CD4-positive, alpha-beta T cell (primary cell): ENCODE measurements at regions of chr11 and their contacts with region 1.

Region 1: DNA sequence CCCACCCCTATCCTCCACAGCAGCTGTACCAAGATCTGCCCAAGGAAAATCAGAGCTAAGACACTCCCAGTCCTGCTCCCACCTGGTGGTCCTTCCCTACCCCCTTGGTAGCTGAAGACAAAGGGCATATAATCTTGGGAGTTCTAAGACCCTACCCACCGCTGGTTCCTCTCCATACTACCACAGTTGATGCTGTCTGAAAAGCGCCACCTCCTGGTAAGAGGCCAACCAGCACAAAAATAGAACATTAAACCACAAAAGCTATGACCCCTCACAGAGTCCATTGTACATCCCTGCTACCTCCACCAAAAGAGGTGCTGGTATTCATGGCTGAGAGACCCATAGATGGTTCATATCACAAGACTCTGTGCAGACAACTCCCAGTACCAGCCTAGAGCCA is 161.5 kb upstream of the ARHGAP42 start:
- DNase-seq: no peak
- ATAC-seq: no peak
- H3K4me3 ChIP-seq: no peak overlapping the region
- H3K4me3 Mint-ChIP-seq: no peak overlapping the region
- H3K27ac ChIP-seq: no peak overlapping the region
- H3K27ac Mint-ChIP-seq: no peak overlapping the region
- H3K4me1 ChIP-seq: no peaks in the 10 kb centered on the region
- H3K4me1 Mint-ChIP-seq: no peaks in the 10 kb centered on the region
- H3K27me3 ChIP-seq: no peaks in the 10 kb centered on the region
- H3K27me3 Mint-ChIP-seq: no peaks in the 10 kb centered on the region
- CTCF ChIP-seq: no peak

Region 2: GRCh38 chr11:100467821-100468508 is 57.7 kb before region 1 on chr11:
- CTCF ChIA-PET with region 1: no interaction called
- POLR2A ChIA-PET with region 1: no interaction called
- intact Hi-C with region 1: loop called in 1 of 2 experiments (anchors 10 kb)
- DNase-seq: no peak
- ATAC-seq: no peak
- H3K4me3 ChIP-seq: no peak overlapping the region
- H3K4me3 Mint-ChIP-seq: no peak overlapping the region
- H3K27ac ChIP-seq: no peak overlapping the region
- H3K27ac Mint-ChIP-seq: no peak overlapping the region
- H3K4me1 ChIP-seq: no peaks in the 10 kb centered on the region
- H3K4me1 Mint-ChIP-seq: no peaks in the 10 kb centered on the region
- H3K27me3 ChIP-seq: no peaks in the 10 kb centered on the region
- H3K27me3 Mint-ChIP-seq: no peaks in the 10 kb centered on the region
- CTCF ChIP-seq: no peak

Region 3: GRCh38 chr11:101199416-101199815 is 673.8 kb after region 1 on chr11:
- CTCF ChIA-PET with region 1: no interaction called
- POLR2A ChIA-PET with region 1: no interaction called
- intact Hi-C with region 1: no loop called
- DNase-seq: no peak
- ATAC-seq: no peak
- H3K4me3 ChIP-seq: no peak overlapping the region
- H3K4me3 Mint-ChIP-seq: no peak overlapping the region
- H3K27ac ChIP-seq: no peak overlapping the region
- H3K27ac Mint-ChIP-seq: no peak overlapping the region
- H3K4me1 ChIP-seq: no peaks in the 10 kb centered on the region
- H3K4me1 Mint-ChIP-seq: no peaks in the 10 kb centered on the region
- H3K27me3 ChIP-seq: no peaks in the 10 kb centered on the region
- H3K27me3 Mint-ChIP-seq: no peaks in the 10 kb centered on the region
- CTCF ChIP-seq: no peak